ENCODE measurements at regions of chr1 and their contacts with region 1.

Region 1: GRCh38 chr1:155105604-155106022 is 22.1 kb upstream of the EFNA1 start:
- DNase-seq: no peak
- ATAC-seq: no peak
- H3K4me3 ChIP-seq: no peak overlapping the region
- H3K27ac ChIP-seq: no peak overlapping the region
- H3K4me1 ChIP-seq: no peaks in the 10 kb centered on the region
- CTCF ChIP-seq: no peak
- EP300 ChIP-seq: no peak
- POLR2A ChIP-seq: no peak
- RAD21 ChIP-seq: no peak

Region 2: DNA sequence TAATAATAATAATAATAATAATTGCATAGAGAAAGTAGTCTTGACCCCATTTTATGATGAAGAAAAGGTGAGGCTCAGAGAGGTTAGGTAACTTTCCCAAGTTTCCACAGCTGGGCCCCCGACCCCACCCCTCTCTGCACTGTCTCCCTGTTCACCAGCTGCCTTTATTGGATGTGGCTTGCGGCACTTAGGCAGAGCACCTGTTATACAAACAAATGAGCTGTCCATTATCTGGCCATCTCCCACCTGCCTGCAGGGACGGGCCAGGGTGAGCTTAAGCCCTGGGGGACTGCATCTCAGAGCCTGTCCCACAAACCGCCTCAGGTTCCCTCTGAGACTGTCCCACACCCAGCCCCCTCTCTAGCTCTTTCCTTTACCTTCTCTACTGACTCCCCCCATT is 12.0 kb after region 1 on chr1:
- CTCF ChIA-PET with region 1: interaction called, 309 read pairs
- POLR2A ChIA-PET with region 1: no interaction called
- DNase-seq: no peak
- ATAC-seq: no peak
- H3K4me3 ChIP-seq: no peak overlapping the region
- H3K27ac ChIP-seq: no peak overlapping the region
- H3K4me1 ChIP-seq: no peaks in the 10 kb centered on the region
- CTCF ChIP-seq: no peak
- EP300 ChIP-seq: no peak
- POLR2A ChIP-seq: no peak
- RAD21 ChIP-seq: no peak

Region 3: DNA sequence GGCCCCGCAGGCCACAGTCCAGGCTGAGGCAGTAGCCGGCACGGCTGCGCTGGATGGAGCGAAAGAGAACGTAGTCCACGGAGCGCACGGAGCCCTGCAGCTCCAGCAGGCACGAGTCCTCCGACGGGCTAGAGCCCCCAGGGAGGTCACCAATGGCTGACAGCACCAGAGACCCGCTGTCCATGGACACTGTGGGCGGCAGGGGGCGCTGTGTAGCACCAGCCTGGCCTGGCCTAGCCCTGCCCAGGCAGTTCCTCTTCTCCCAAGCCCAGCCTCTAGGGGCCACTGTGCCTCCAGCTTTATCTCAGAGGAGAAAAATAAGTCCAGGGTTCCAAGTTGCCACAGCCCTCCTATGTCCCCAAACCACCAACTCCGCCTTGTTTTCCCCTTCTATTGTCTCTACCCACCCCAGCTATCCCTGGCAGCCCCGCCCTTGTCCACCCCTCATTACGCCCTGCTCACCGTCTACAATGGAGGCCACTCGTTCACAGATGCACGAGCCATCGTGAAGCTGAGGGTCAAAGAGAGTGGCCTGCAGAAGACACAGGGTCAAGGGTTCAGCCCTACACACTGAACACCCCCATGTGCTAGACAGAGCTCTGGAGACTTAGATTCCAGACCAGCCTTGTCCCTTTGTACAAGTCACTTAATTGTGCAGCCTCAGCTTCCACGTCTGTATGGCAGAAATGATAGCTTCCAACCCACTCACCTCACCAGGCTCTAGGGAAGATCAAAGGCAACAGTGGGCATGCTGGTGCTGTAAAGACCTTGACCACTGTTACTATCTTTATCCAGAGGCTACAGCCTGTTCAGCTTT is 145.2 kb after region 1 on chr1:
- CTCF ChIA-PET with region 1: no interaction called
- POLR2A ChIA-PET with region 1: no interaction called
- DNase-seq: peak; percentile 91 to 98
- ATAC-seq: peak; percentile 82 to 92
- H3K4me3 ChIP-seq: no peak overlapping the region
- H3K27ac ChIP-seq: peak overlapping the region in 1 of 2 experiments; percentile 76; a peak in 3 of 6 replicates
- H3K4me1 ChIP-seq: peaks cover 19% of the 10 kb centered on the region
- CTCF ChIP-seq: peak; percentile 99
- EP300 ChIP-seq: no peak
- POLR2A ChIP-seq: no peak
- RAD21 ChIP-seq: peak; percentile 88 to 90